ENCODE measurements at regions of chr10 and their contacts with region 1.

Region 1: DNA sequence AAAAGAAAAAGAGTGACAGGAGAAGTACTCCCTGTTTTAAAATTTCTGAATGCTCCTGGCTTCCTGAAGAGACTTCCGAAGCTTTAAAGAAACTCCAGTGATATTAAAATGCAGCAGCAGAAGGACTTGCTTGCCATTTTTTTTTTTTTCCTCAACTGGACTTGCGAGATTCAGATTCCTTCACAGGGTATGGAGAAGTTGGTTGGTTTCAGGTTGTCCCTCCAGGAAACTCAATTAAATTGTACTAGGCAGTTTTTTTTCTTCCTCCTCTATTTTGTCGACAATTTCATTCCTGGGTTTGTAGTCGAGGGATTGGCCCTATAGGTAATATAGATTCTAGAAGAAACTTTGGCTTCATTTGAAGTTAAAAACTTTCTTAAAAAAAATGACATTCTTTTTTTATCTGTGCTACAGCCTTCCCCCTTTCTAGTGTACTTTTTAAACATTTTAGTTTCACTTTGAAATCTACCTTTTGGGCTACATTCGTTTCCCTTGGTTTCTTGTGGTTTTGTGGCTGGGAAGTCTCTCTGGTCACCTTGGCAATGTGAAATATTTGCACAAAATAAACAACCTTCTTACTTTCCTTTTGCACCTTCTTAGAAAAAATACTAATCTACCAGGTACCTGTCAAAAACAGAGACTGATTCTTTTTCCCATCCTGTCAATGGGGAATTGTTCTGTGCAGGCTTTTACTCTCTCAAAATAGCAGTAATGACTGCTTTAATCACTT is 350.1 kb downstream of the GATA3 start:
- DNase-seq: peak; percentile 49
- ATAC-seq: peak; percentile 10
- H3K4me3 Mint-ChIP-seq: peak overlapping the region; percentile 55
- H3K27ac Mint-ChIP-seq: peak overlapping the region; percentile 73
- H3K4me1 Mint-ChIP-seq: peaks cover 69% of the 10 kb centered on the region
- H3K27me3 Mint-ChIP-seq: no peaks in the 10 kb centered on the region

Region 2: GRCh38 chr10:8065651-8066050 is 338.9 kb before region 1 on chr10:
- CTCF ChIA-PET with region 1: interaction called, 3 read pairs
- POLR2A ChIA-PET with region 1: interaction called, 3 read pairs
- intact Hi-C with region 1: loop called (anchors 1 to 2 kb)
- DNase-seq: no peak
- ATAC-seq: peak; percentile 43
- H3K4me3 Mint-ChIP-seq: peak overlapping the region; percentile 64
- H3K27ac Mint-ChIP-seq: peak overlapping the region; percentile 90
- H3K4me1 Mint-ChIP-seq: peaks cover 95% of the 10 kb centered on the region
- H3K27me3 Mint-ChIP-seq: no peaks in the 10 kb centered on the region

Region 3: GRCh38 chr10:8138471-8138870 is 266.1 kb before region 1 on chr10:
- CTCF ChIA-PET with region 1: no interaction called
- POLR2A ChIA-PET with region 1: no interaction called
- intact Hi-C with region 1: loop called (anchors 2 to 5 kb)
- DNase-seq: no peak
- ATAC-seq: no peak
- H3K4me3 Mint-ChIP-seq: no peak overlapping the region
- H3K27ac Mint-ChIP-seq: peak overlapping the region; percentile 60
- H3K4me1 Mint-ChIP-seq: peaks cover 36% of the 10 kb centered on the region
- H3K27me3 Mint-ChIP-seq: peaks cover 2% of the 10 kb centered on the region

Region 4: GRCh38 chr10:8254350-8254749 is 150.2 kb before region 1 on chr10:
- CTCF ChIA-PET with region 1: no interaction called
- POLR2A ChIA-PET with region 1: no interaction called
- intact Hi-C with region 1: loop called in 1 of 2 experiments (anchors 2 kb)
- DNase-seq: peak; percentile 57
- ATAC-seq: peak; percentile 96
- H3K4me3 Mint-ChIP-seq: no peak overlapping the region
- H3K27ac Mint-ChIP-seq: peak overlapping the region; percentile 92
- H3K4me1 Mint-ChIP-seq: peaks cover 22% of the 10 kb centered on the region
- H3K27me3 Mint-ChIP-seq: no peaks in the 10 kb centered on the region

Region 5: GRCh38 chr10:8331883-8332729 is 72.5 kb before region 1 on chr10:
- CTCF ChIA-PET with region 1: interaction called, 3 read pairs
- POLR2A ChIA-PET with region 1: no interaction called
- intact Hi-C with region 1: loop called in 1 of 2 experiments (anchors 5 kb)
- DNase-seq: peak; percentile 89
- ATAC-seq: peak; percentile 94
- H3K4me3 Mint-ChIP-seq: peak overlapping the region; percentile 79
- H3K27ac Mint-ChIP-seq: peak overlapping the region; percentile 78
- H3K4me1 Mint-ChIP-seq: peaks cover 60% of the 10 kb centered on the region
- H3K27me3 Mint-ChIP-seq: peaks cover 2% of the 10 kb centered on the region

Region 6: DNA sequence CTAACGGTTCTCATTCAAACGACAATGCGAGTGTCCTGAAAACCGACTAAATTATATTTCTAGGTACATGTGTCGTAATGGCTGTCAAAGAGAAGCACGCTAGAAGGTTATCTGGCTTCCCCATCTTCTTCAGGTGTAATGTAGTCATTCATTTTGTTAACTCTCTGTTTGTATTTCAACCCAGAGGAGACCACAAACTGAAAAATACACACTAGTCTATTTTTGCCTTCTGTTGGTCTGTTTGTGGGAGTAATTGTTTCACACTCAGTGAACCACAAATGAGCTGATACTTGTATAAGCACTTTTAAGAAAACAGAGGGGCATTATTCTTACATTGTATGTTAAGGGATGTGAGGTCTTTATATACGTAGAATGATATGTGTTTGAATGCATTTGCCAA is 44.2 kb before region 1 on chr10:
- CTCF ChIA-PET with region 1: no interaction called
- POLR2A ChIA-PET with region 1: no interaction called
- intact Hi-C with region 1: loop called in 1 of 2 experiments (anchors 5 kb)
- DNase-seq: no peak
- ATAC-seq: peak; percentile 49
- H3K4me3 Mint-ChIP-seq: no peak overlapping the region
- H3K27ac Mint-ChIP-seq: no peak overlapping the region
- H3K4me1 Mint-ChIP-seq: peaks cover 34% of the 10 kb centered on the region
- H3K27me3 Mint-ChIP-seq: no peaks in the 10 kb centered on the region

Region 7: DNA sequence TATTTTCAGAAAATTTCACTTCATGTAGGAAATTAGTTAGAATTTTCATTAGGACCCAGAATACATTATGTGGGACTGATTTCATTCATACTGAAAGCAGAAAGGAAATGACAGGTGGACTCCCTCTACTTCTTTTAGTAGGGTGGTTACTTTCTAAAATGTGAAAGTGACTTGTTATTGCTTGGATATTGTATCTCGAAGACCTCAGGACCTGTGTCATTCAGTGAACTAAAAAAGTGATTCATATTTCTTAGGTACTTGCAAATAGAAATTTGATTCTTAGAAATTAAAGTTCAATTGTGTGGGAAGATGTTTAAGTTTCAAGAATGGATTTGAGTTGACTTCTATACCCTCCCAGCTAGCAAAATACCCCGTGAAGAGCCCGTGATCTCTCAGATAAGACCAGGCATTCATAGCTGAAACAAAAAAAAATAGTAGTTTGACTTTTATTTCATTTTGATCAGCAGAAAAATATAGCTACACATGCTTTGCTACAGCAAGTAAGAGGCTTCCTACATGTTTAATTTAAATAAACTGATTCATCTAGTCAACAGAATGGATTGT is 687.1 kb after region 1 on chr10:
- CTCF ChIA-PET with region 1: no interaction called
- POLR2A ChIA-PET with region 1: no interaction called
- intact Hi-C with region 1: loop called in 1 of 2 experiments (anchors 5 kb)
- DNase-seq: peak; percentile 57
- ATAC-seq: peak; percentile 97
- H3K4me3 Mint-ChIP-seq: peak overlapping the region; percentile 27
- H3K27ac Mint-ChIP-seq: peak overlapping the region; percentile 52
- H3K4me1 Mint-ChIP-seq: peaks cover 51% of the 10 kb centered on the region
- H3K27me3 Mint-ChIP-seq: peaks cover 3% of the 10 kb centered on the region

Region 8: GRCh38 chr10:9786101-9786500 is 1381.5 kb after region 1 on chr10:
- CTCF ChIA-PET with region 1: no interaction called
- POLR2A ChIA-PET with region 1: no interaction called
- intact Hi-C with region 1: no loop called
- DNase-seq: no peak
- ATAC-seq: no peak
- H3K4me3 Mint-ChIP-seq: no peak overlapping the region
- H3K27ac Mint-ChIP-seq: no peak overlapping the region
- H3K4me1 Mint-ChIP-seq: no peaks in the 10 kb centered on the region
- H3K27me3 Mint-ChIP-seq: peaks cover 8% of the 10 kb centered on the region

Measured in activated CD4-positive, alpha-beta T cell treated with anti-CD3 and anti-CD28 coated beads for 36 hours (primary cell).